Head of caudate nucleus (tissue), 42 donors: ENCODE measurements at regions of chr15 and their contacts with region 1.

Region 1: GRCh38 chr15:40893733-40894688 is at the start of gene VPS18:
- DNase-seq: peak; percentile 98 to 100 (median 99)

Region 2: DNA sequence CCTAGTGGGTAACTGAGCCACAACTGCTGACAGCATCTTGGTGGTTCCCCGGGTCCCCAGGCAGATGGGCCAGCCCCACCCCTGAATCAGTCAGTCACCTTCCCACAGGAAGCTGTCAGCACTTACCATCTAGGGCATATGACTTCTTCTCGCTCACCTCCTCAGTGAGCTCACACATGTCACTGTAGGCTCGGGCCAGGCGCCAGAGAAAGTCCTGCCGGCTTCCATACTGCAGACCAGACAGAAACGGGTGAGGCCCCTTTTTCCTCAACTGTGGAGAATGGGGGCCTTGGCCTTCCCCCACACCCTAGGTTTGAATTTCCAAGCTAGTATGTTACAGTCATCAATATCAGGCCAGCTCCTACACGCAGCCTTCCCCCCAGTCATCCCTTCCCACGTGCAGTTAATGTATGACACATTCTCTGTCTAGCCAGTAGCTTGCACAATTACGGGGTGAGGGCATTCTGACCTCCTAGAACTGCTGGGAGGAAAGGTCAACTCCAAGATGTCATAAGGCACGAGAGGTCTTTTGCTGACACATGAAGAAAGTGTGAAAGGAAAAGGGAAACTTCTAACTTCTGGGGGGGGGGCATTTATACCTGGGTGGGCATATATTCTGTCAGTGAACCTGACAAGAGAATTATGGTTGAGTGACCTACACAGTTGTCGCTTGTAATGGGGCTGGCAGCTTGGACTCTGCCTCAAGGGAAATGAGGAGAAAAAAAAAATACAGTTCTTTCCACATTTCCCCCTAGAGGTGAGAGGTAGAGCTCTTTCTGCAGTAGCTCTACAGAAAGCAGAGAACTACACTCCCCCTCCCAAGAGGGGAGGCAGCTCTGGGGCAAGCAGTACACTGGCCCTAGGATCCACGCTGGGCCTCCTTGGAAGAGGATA is 149.8 kb before region 1 on chr15:
- intact Hi-C with region 1: no loop called
- DNase-seq: peak in 2 of 42 donors; percentile 17 to 29

Region 3: GRCh38 chr15:40754883-40755811 is 138.9 kb before region 1 on chr15 and contains the start of gene RMDN3:
- intact Hi-C with region 1: loop called (anchors 10 kb)
- DNase-seq: peak; percentile 67 to 97 (median 93)

Region 4: GRCh38 chr15:40807028-40807887 is 86.8 kb before region 1 on chr15 and contains the starts of genes DNAJC17 and ZFYVE19:
- intact Hi-C with region 1: loop called (anchors 10 kb)
- DNase-seq: peak; percentile 94 to 100 (median 98)

Region 5: GRCh38 chr15:40825661-40826088 is 68.3 kb before region 1 on chr15:
- intact Hi-C with region 1: no loop called
- DNase-seq: no peak

Region 6: GRCh38 chr15:40857601-40858341 is 36.2 kb before region 1 on chr15:
- intact Hi-C with region 1: loop called (anchors 2 kb)
- DNase-seq: peak; percentile 49 to 89 (median 74)

Region 7: DNA sequence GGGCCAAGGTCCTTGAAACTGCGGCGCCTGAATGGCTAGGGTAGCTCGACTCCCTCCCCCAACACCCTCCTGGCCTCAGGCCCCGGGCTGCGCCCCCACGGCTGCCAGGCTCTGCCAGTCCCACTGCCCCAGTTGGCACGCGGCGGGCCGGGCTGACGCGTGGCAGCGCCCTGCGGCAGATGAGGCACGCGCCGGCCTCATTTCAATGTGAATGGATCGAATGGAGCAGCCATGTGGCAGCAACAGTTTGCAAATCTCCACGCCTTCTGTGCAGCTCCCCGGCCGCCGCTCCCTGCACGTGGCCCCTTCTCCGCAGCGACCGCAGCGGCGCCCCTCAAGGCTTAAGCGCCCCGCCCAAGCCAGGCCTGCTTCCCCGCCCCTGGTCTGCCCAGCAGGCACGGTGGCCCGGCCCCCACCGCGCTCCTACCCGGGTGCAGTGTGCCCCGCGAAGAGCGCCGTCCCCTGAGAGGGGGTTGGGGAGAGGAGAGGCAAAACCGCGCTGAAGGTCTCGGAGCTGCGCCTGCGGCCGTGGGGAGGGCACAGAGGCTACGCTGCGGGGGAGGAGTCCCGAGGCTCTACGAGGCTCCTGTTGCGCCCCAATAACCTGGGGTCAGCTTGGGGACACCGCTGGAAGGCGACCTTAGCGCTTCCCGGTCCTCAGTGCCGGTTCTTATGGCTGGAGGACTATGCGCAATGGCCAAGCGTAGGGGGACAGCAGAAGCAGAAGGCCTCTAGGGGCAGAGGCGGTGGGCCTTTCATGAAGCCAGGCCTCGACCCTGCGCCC is 32.1 kb after region 1 on chr15:
- intact Hi-C with region 1: no loop called
- DNase-seq: peak in 19 of 42 donors; percentile 20 to 71 (median 46)

Region 8: GRCh38 chr15:41116116-41116871 is 222.3 kb after region 1 on chr15 and contains the start of gene INO80:
- intact Hi-C with region 1: loop called (anchors 5 kb)
- DNase-seq: peak; percentile 91 to 99 (median 97)